ENCODE measurements at regions of chr19 and their contacts with region 1.

Region 1: GRCh38 chr19:20423381-20424197 is 142.0 kb downstream of the ZNF737 start:
- DNase-seq: peak; percentile 56
- H3K4me3 ChIP-seq: peak overlapping the region; percentile 43 to 58 (median 52)
- H3K27ac ChIP-seq: peak overlapping the region; percentile 22
- H3K4me1 ChIP-seq: no peaks in the 10 kb centered on the region
- H3K27me3 ChIP-seq: no peaks in the 10 kb centered on the region
- CTCF ChIP-seq: no peak

Region 2: GRCh38 chr19:20565321-20566018 is 141.9 kb after region 1 on chr19 and contains the start of gene ZNF737:
- CTCF ChIA-PET with region 1: no interaction called
- dilution Hi-C with region 1: no loop called
- in situ Hi-C with region 1: no loop called
- intact Hi-C with region 1: loop called (anchors 10 kb)
- DNase-seq: peak; percentile 94
- H3K4me3 ChIP-seq: peak within 1 kb of the TSS; percentile 52 to 88 (median 74)
- H3K27ac ChIP-seq: peak within 1 kb of the TSS; percentile 57
- H3K4me1 ChIP-seq: no peaks in the 10 kb centered on the region
- H3K27me3 ChIP-seq: no peaks in the 10 kb centered on the region
- CTCF ChIP-seq: peak in 1 of 2 donors; percentile 49
- total RNA-seq, gene ZNF737: 6.3 to 16.0 TPM

Region 3: GRCh38 chr19:20923077-20923871 is 499.7 kb after region 1 on chr19 and contains the start of gene ZNF85:
- CTCF ChIA-PET with region 1: no interaction called
- dilution Hi-C with region 1: no loop called
- in situ Hi-C with region 1: no loop called
- intact Hi-C with region 1: loop called (anchors 10 kb)
- DNase-seq: peak; percentile 90
- H3K4me3 ChIP-seq: peak within 1 kb of the TSS; percentile 71 to 93 (median 76)
- H3K27ac ChIP-seq: peak within 1 kb of the TSS; percentile 72
- H3K4me1 ChIP-seq: no peaks in the 10 kb centered on the region
- H3K27me3 ChIP-seq: no peaks in the 10 kb centered on the region
- CTCF ChIP-seq: no peak
- total RNA-seq, gene ZNF85: 9.8 to 10.5 TPM

Measured in mammary epithelial cell (primary cell).